ENCODE measurements at regions of chr2 and their contacts with region 1.

Region 1: DNA sequence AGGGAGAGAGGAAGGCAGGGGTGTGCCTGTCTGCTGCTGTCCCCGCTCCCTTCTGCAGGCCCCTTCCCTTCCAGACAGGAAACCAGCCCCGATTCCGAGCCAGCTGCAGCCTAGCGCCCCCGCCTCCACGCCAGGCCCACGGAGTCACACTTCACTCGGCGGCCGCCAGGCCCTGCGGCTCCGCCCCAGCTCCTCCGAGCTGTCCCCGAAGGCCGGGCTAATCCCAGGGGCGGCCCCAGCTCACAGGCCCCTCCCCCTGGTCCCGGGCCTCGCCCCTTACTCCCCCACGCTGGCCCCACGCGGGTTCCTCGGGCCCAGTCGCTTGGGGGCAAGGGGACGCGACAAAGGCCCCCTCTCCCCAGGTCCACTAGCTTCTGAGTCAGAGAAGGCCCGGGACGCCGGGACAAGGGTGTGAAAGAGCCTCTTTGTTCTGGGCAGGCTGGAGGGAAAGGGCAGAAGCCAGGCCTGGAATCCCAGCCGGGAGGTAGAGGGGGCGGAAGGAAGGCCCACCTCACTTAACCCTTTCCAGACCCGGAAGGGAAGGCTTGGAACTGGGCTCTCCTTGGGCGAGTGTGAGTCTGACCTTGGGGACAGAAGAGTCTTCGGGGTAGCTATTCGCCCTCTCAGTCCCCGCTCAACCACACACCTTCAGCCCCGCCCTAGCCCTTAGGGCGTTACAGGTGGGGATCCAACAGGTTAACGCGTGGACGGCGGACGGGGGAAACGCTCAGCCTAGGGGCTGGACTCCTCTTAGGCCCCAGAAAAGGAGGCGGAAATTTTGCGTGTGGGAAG is 1.2 kb downstream of the RTKN start:
- DNase-seq: peak; percentile 68 to 87
- H3K4me3 ChIP-seq: peak overlapping the region; percentile 66
- H3K27ac ChIP-seq: peak overlapping the region; percentile 64
- H3K4me1 ChIP-seq: peaks cover 17% of the 10 kb centered on the region
- H3K27me3 ChIP-seq: no peaks in the 10 kb centered on the region
- CTCF ChIP-seq: no peak

Region 2: GRCh38 chr2:74080346-74080745 is 360.2 kb before region 1 on chr2:
- CTCF ChIA-PET with region 1: no interaction called
- POLR2A ChIA-PET with region 1: no interaction called
- intact Hi-C with region 1: no loop called
- DNase-seq: no peak
- H3K4me3 ChIP-seq: no peak overlapping the region
- H3K27ac ChIP-seq: no peak overlapping the region
- H3K4me1 ChIP-seq: no peaks in the 10 kb centered on the region
- H3K27me3 ChIP-seq: no peaks in the 10 kb centered on the region
- CTCF ChIP-seq: no peak

Region 3: GRCh38 chr2:74401891-74402290 is 38.7 kb before region 1 on chr2:
- CTCF ChIA-PET with region 1: interaction called, 5 read pairs
- POLR2A ChIA-PET with region 1: interaction called, 10 read pairs
- intact Hi-C with region 1: no loop called
- DNase-seq: no peak
- H3K4me3 ChIP-seq: no peak overlapping the region
- H3K27ac ChIP-seq: no peak overlapping the region
- H3K4me1 ChIP-seq: peaks cover 5% of the 10 kb centered on the region
- H3K27me3 ChIP-seq: no peaks in the 10 kb centered on the region
- CTCF ChIP-seq: no peak

Region 4: DNA sequence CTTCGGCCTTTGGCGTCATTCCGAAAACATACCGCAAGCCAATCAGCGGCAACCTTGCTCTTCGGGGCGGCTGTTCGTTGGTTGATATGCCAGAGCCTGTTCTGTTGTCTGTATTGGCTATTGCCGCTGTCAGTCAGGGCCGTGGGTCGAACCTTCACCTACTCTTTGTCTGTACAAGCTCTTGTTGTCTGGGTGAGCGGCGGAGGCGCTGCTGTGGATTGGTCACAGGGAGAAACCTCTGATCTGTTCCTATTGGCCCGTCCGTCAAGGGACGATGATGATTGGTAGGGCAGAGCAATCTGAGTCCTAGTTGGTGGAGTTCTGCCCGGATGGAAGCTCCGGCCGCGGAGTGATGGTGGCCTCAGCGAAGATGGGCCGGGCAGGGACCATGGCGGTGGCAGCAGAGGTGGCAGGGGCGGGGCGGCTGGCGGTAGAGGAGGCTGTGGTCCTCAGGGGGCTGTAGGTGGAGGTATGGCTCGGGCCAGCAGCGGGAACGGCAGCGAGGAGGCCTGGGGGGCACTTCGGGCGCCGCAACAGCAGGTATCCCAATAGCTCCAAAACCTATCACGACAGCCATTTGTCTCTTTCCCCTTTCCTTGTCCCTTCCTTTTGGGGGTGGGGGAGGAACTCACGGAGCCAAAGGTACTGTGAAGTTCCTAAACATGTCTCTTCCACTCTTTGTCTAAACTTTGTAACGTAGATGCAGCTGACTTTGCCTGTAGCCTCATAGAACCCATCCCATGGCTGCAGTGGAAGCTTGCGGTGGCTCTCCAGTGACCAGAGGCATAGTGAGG is 17.8 kb after region 1 on chr2 and contains the start of gene WBP1:
- CTCF ChIA-PET with region 1: no interaction called
- POLR2A ChIA-PET with region 1: interaction called, 9 read pairs
- intact Hi-C with region 1: loop called (anchors 1 kb)
- DNase-seq: peak; percentile 99 to 100
- H3K4me3 ChIP-seq: peak within 1 kb of the TSS; percentile 93
- H3K27ac ChIP-seq: peak within 1 kb of the TSS; percentile 29; the same call in 1 of the 2 replicates
- H3K4me1 ChIP-seq: peaks cover 22% of the 10 kb centered on the region
- H3K27me3 ChIP-seq: no peaks in the 10 kb centered on the region
- CTCF ChIP-seq: no peak
- total RNA-seq, gene WBP1: 68.0 and 74.7 TPM in 2 replicates

Region 5: GRCh38 chr2:74529357-74530238 is 89.0 kb after region 1 on chr2 and contains the starts of genes AUP1 and HTRA2:
- CTCF ChIA-PET with region 1: no interaction called
- POLR2A ChIA-PET with region 1: interaction called, 4 read pairs
- intact Hi-C with region 1: loop called (anchors 1 kb)
- DNase-seq: peak; percentile 97 to 98
- H3K4me3 ChIP-seq: peak within 1 kb of the TSS; percentile 93
- H3K27ac ChIP-seq: peak within 1 kb of the TSS; percentile 48
- H3K4me1 ChIP-seq: peaks cover 18% of the 10 kb centered on the region
- H3K27me3 ChIP-seq: no peaks in the 10 kb centered on the region
- CTCF ChIP-seq: no peak
- total RNA-seq, gene AUP1: 79.2 and 84.0 TPM in 2 replicates
- total RNA-seq, gene HTRA2: 23.2 and 23.5 TPM in 2 replicates

Measured in PC-9 (cell line).